Prostate gland (tissue), 2 donors: ENCODE measurements at regions of chr4 and their contacts with region 1.

Region 1: DNA sequence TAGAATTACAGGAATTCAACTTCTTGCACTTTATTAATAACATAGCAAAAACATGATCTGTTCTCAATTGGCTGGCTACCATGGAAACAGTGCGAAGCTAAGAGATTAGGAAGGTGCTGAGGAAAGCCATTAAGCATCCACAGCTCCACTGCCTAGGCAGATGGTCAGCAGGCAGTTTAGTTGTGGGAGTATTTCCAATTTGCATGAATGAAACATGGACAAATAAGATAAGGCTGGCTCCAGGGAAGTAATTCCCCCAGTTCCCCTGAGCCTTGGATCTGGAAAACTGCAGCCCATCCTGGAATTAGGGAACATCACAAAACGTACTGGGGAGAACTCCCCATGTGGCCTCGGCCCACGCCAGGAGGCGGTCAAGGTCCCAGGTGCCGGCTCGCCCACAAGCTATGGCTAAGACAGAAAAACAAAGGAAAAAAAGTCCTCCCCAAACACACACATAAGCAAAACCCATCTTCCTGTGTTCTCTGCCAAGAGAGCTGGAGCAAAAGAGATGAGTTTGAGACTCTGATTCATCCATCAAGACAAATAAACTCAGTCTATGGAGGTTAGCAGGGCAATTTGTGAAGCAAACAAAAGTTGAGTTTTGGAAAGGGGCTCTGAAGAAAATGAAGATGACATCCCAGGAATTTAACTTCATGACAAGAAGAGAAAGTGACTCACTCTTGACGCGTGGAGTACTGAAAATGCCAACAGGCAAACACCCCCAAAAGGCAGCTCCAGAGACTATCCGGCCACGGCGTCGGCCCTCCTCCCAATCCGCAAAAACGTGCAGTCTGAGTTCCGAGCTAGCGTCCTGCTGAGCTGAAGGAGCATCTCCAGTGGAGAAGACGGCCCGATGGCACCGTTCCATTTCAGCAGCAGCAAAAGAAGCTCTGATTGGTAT is 45.1 kb downstream of the IGFBP7 start:
- DNase-seq: no peak
- H3K4me3 ChIP-seq: no peak overlapping the region
- H3K27ac ChIP-seq: peak overlapping the region; percentile 37 to 59
- H3K4me1 ChIP-seq: no peaks in the 10 kb centered on the region
- H3K27me3 ChIP-seq: no peaks in the 10 kb centered on the region
- CTCF ChIP-seq: no peak
- POLR2A ChIP-seq: no peak

Region 2: DNA sequence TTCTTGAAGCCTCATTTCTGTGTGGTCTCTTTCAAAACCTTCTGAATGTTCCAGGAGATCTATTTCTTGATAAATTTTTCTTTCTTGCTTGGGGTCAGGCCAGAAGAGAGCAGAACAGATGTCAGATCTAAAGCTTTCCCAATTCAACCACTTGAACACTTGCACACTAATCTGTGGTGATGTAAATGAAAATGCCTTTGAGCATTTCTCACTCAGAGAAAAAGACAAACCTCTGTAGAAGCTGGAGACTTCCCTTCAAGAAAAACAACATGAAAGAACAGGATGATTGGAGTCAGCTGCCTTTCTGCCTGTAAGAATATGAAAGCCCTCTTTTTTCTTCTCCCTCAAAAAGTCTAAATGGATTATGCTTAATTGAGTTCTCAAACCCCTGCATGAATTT is 33.9 kb after region 1 on chr4:
- intact Hi-C with region 1: loop called (anchors 1 kb)
- DNase-seq: no peak
- H3K4me3 ChIP-seq: no peak overlapping the region
- H3K27ac ChIP-seq: peak overlapping the region; percentile 52 to 54
- H3K4me1 ChIP-seq: no peaks in the 10 kb centered on the region
- H3K27me3 ChIP-seq: no peaks in the 10 kb centered on the region
- CTCF ChIP-seq: no peak
- POLR2A ChIP-seq: no peak